Caco-2 (cell line): ENCODE measurements at regions of chr10 and their contacts with region 1.

Region 1: GRCh38 chr10:21495752-21496342 is 29.6 kb downstream of the SKIDA1 start:
- DNase-seq: peak; percentile 95 to 99
- H3K4me3 ChIP-seq: peak overlapping the region; percentile 92
- H3K4me3 Mint-ChIP-seq: peak overlapping the region; percentile 85
- H3K27ac Mint-ChIP-seq: peak overlapping the region; percentile 69
- H3K4me1 ChIP-seq: no peaks in the 10 kb centered on the region
- H3K4me1 Mint-ChIP-seq: no peaks in the 10 kb centered on the region
- H3K27me3 ChIP-seq: no peaks in the 10 kb centered on the region
- H3K27me3 Mint-ChIP-seq: no peaks in the 10 kb centered on the region
- CTCF ChIP-seq: peak; percentile 88 to 99

Region 2: DNA sequence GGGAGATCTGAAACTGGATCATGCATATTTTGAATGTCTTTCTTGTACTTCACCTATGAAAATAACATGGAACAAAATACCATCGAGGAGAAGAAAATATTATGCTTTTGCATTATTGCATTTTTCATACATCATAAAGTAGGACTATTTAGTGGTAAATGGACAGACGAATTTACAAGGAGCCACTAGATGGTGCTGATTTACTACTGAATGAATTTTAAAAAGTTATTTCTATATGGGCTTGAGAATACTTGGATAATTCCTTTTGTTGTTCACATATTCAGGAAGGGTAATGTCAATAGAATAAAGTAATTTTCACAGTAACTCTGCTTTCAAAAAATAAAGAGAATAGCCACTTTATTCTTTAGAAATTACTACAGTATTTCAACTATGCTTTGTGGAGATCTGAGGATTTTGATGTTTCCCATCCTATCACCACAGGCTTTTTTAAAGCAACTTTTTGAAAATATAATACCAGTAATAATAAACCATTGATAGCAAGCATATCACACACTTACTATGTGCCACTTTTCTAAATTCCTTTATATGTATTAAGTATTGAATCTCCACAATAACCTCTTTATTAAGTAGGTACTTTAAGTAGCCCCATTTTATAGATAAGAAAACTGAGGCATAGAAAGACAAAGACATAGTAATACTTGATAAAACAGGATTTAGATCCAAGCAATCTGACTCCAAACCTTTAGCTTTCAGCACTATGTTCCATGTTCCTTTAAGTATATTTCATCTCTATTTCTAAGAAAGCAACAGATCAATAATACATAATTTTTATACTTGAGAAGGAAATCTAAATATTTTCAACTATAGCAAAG is 637.3 kb before region 1 on chr10:
- CTCF ChIA-PET with region 1: no interaction called
- POLR2A ChIA-PET with region 1: no interaction called
- intact Hi-C with region 1: loop called (anchors 2 kb)
- DNase-seq: peak in 1 of 2 experiments; percentile 35
- H3K4me3 ChIP-seq: no peak overlapping the region
- H3K4me3 Mint-ChIP-seq: no peak overlapping the region
- H3K27ac Mint-ChIP-seq: no peak overlapping the region
- H3K4me1 ChIP-seq: no peaks in the 10 kb centered on the region
- H3K4me1 Mint-ChIP-seq: no peaks in the 10 kb centered on the region
- H3K27me3 ChIP-seq: no peaks in the 10 kb centered on the region
- H3K27me3 Mint-ChIP-seq: no peaks in the 10 kb centered on the region
- CTCF ChIP-seq: peak; percentile 55 to 68

Region 3: DNA sequence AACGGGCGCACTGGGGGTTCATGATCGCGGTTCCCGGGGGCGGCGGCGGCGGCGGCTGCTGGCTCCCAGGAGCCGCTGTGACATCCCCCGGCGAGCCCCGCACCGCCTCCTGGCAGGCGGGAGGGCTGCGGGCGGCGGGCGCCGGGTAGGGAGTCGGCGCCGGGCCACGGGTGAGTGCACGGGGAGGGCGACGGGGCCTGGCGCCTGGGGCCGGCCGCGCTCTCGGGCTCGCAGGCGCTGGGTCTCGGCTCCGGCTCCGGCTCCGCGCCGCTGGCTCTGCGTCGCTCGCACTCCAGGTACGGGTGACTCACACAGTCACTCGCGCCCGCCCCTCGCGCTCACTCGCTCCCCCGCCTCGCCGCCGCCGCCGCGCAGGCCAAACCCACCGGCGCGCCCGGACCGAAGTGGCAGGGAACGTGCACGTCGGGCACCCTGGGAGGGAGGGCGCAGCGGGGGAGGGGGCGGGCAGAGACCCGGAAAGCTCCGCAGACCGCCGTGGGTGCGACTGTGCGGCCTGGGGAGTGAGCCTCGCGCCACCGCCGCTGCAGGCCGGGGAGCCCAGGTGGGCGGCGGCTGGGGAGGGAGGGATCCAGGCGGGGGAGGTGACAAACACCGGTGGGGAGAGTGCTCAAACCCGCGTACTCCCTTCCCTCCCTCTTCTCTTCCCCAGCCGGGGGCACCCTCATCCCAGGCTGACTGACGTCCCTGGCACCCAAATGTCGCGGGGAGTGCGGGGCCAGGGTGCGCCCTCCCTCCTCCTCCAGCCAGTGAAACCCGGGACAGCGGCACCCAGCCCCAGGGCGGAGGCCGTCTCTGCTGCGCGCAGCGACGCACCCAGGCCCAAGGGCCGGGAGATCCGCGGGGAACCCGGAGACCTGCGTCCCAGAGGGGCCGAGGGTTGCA is 321.8 kb before region 1 on chr10:
- CTCF ChIA-PET with region 1: no interaction called
- POLR2A ChIA-PET with region 1: no interaction called
- intact Hi-C with region 1: loop called (anchors 5 kb)
- DNase-seq: peak; percentile 87 to 91
- H3K4me3 ChIP-seq: peak overlapping the region; percentile 91
- H3K4me3 Mint-ChIP-seq: peak overlapping the region; percentile 94
- H3K27ac Mint-ChIP-seq: peak overlapping the region; percentile 88
- H3K4me1 ChIP-seq: peaks cover 44% of the 10 kb centered on the region
- H3K4me1 Mint-ChIP-seq: peaks cover 40% of the 10 kb centered on the region
- H3K27me3 ChIP-seq: no peaks in the 10 kb centered on the region
- H3K27me3 Mint-ChIP-seq: no peaks in the 10 kb centered on the region
- CTCF ChIP-seq: peak in 1 of 2 experiments; percentile 23

Region 4: GRCh38 chr10:21510241-21511074 is 14.6 kb after region 1 on chr10:
- CTCF ChIA-PET with region 1: interaction called, 25 read pairs
- POLR2A ChIA-PET with region 1: interaction called, 22 read pairs
- intact Hi-C with region 1: loop called (anchors 1 kb)
- DNase-seq: peak; percentile 51 to 56
- H3K4me3 ChIP-seq: no peak overlapping the region
- H3K4me3 Mint-ChIP-seq: peak overlapping the region; percentile 43
- H3K27ac Mint-ChIP-seq: peak overlapping the region; percentile 64
- H3K4me1 ChIP-seq: peaks cover 50% of the 10 kb centered on the region
- H3K4me1 Mint-ChIP-seq: peaks cover 71% of the 10 kb centered on the region
- H3K27me3 ChIP-seq: no peaks in the 10 kb centered on the region
- H3K27me3 Mint-ChIP-seq: no peaks in the 10 kb centered on the region
- CTCF ChIP-seq: no peak

Region 5: GRCh38 chr10:21525367-21526183 is 29.7 kb after region 1 on chr10 and contains the start of gene SKIDA1:
- CTCF ChIA-PET with region 1: interaction called, 14 read pairs
- POLR2A ChIA-PET with region 1: interaction called, 47 read pairs
- intact Hi-C with region 1: loop called (anchors 1 kb)
- DNase-seq: peak; percentile 96 to 97
- H3K4me3 ChIP-seq: peak within 1 kb of the TSS; percentile 70
- H3K4me3 Mint-ChIP-seq: peak within 1 kb of the TSS; percentile 88
- H3K27ac Mint-ChIP-seq: peak within 1 kb of the TSS; percentile 98
- H3K4me1 ChIP-seq: peaks cover 30% of the 10 kb centered on the region
- H3K4me1 Mint-ChIP-seq: peaks cover 31% of the 10 kb centered on the region
- H3K27me3 ChIP-seq: no peaks in the 10 kb centered on the region
- H3K27me3 Mint-ChIP-seq: no peaks in the 10 kb centered on the region
- CTCF ChIP-seq: no peak
- total RNA-seq, gene SKIDA1: 5.7 and 6.3 TPM in 2 replicates

Region 6: GRCh38 chr10:21579291-21579690 is 83.4 kb after region 1 on chr10:
- CTCF ChIA-PET with region 1: no interaction called
- POLR2A ChIA-PET with region 1: no interaction called
- intact Hi-C with region 1: no loop called
- DNase-seq: no peak
- H3K4me3 ChIP-seq: no peak overlapping the region
- H3K4me3 Mint-ChIP-seq: no peak overlapping the region
- H3K27ac Mint-ChIP-seq: no peak overlapping the region
- H3K4me1 ChIP-seq: no peaks in the 10 kb centered on the region
- H3K4me1 Mint-ChIP-seq: peaks cover 6% of the 10 kb centered on the region
- H3K27me3 ChIP-seq: no peaks in the 10 kb centered on the region
- H3K27me3 Mint-ChIP-seq: no peaks in the 10 kb centered on the region
- CTCF ChIP-seq: no peak

Region 7: DNA sequence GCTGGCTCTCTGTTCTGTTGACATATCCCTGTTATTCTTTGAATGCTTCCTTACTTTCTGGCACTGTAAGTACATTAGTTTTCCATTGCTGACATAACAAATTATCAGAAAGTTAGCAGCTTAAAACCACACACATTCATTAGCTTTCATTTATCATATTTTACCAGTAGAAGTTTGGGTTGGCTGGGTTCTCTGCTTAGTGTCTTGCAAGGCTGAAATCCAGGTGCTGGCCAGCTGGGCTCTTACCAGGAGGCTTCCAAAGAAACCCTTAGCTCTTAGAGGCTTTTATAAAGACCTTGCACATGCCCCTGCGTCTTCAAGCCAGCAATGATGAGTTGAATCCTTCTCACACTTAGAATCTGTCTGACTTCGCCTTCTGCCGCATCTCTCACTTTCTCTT is 198.8 kb after region 1 on chr10:
- CTCF ChIA-PET with region 1: no interaction called
- POLR2A ChIA-PET with region 1: no interaction called
- intact Hi-C with region 1: no loop called
- DNase-seq: no peak
- H3K4me3 ChIP-seq: no peak overlapping the region
- H3K4me3 Mint-ChIP-seq: no peak overlapping the region
- H3K27ac Mint-ChIP-seq: no peak overlapping the region
- H3K4me1 ChIP-seq: no peaks in the 10 kb centered on the region
- H3K4me1 Mint-ChIP-seq: no peaks in the 10 kb centered on the region
- H3K27me3 ChIP-seq: no peaks in the 10 kb centered on the region
- H3K27me3 Mint-ChIP-seq: no peaks in the 10 kb centered on the region
- CTCF ChIP-seq: no peak

Region 8: DNA sequence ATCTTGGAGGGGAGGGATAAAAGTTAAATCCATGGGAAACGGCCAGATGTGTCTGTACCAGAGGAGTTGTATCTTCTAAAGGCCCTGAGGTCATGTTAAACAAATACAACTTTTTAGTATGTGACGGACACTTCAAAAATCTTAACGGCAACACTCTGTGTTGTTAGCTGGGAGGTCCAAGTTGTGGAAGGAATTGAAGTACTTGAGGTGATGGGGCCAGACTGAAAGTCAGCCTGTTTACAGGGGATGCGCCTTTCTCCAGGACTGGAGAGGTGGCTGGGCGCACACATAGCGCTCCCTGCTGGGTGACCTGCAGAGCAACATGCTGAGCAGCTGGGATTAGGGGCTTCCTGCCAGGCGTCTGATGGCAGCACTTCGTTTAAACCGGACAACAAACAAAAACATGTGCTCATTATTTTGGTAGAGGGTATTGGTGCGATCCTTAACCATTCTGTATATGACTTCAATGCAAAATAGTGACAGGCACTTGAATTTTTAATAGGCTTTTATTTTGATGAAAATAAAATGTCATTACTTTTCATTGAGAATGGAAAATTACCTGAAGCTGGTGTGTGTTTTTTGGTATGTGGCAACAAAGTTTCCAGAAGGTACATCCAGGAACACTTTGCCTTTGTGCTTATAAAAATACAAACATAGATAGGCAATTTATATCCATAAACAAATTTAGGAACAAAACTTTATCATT is 236.4 kb after region 1 on chr10:
- CTCF ChIA-PET with region 1: interaction called, 7 read pairs
- POLR2A ChIA-PET with region 1: interaction called, 3 read pairs
- intact Hi-C with region 1: loop called (anchors 1 kb)
- DNase-seq: peak; percentile 72
- H3K4me3 ChIP-seq: no peak overlapping the region
- H3K4me3 Mint-ChIP-seq: no peak overlapping the region
- H3K27ac Mint-ChIP-seq: no peak overlapping the region
- H3K4me1 ChIP-seq: peaks cover 8% of the 10 kb centered on the region
- H3K4me1 Mint-ChIP-seq: peaks cover 13% of the 10 kb centered on the region
- H3K27me3 ChIP-seq: no peaks in the 10 kb centered on the region
- H3K27me3 Mint-ChIP-seq: no peaks in the 10 kb centered on the region
- CTCF ChIP-seq: peak; percentile 85 to 87

Region 9: DNA sequence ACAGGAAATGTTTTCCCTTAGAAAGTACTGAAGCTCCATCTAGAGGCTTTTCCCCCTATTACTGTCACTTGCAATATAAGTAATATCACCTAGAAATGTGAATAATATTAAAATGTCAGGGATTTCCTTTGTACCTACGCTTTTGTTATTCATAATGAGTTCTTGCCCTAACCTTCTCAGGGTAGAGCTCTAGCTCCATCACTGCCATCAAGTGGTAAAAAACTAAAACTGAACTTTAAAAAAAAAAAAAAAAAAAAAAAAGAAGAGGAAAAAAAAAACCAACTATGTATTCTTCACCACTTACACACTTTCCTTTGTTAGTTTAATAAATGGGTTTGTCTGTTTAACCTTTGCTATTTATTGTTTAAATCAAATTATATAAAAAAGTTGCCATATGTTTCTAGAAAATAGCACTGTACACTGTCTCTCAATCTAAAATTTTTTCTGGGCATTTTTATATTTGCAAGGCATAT is 457.8 kb after region 1 on chr10:
- CTCF ChIA-PET with region 1: interaction called, 4 read pairs
- POLR2A ChIA-PET with region 1: interaction called, 8 read pairs
- intact Hi-C with region 1: loop called (anchors 1 kb)
- DNase-seq: peak in 1 of 2 experiments; percentile 28
- H3K4me3 ChIP-seq: no peak overlapping the region
- H3K4me3 Mint-ChIP-seq: no peak overlapping the region
- H3K27ac Mint-ChIP-seq: no peak overlapping the region
- H3K4me1 ChIP-seq: no peaks in the 10 kb centered on the region
- H3K4me1 Mint-ChIP-seq: no peaks in the 10 kb centered on the region
- H3K27me3 ChIP-seq: no peaks in the 10 kb centered on the region
- H3K27me3 Mint-ChIP-seq: no peaks in the 10 kb centered on the region
- CTCF ChIP-seq: peak; percentile 41 to 62